ENCODE measurements at regions of chr18 and their contacts with region 1.

Region 1: GRCh38 chr18:3703732-3704176 is 253.8 kb downstream of the TGIF1 start:
- DNase-seq: peak; percentile 59 to 75 (median 75)
- ATAC-seq: peak; percentile 80 to 83
- H3K4me3 ChIP-seq: no peak overlapping the region
- H3K27ac ChIP-seq: no peak overlapping the region
- H3K4me1 ChIP-seq: no peaks in the 10 kb centered on the region
- H3K27me3 ChIP-seq: no peaks in the 10 kb centered on the region

Region 2: GRCh38 chr18:3869848-3870247 is 166.1 kb after region 1 on chr18:
- intact Hi-C with region 1: loop called in 1 of 4 experiments (anchors 10 kb)
- DNase-seq: no peak
- ATAC-seq: peak in 1 of 2 donors; percentile 64
- H3K4me3 ChIP-seq: no peak overlapping the region
- H3K27ac ChIP-seq: no peak overlapping the region
- H3K4me1 ChIP-seq: peaks cover 2% of the 10 kb centered on the region
- H3K27me3 ChIP-seq: no peaks in the 10 kb centered on the region

Region 3: GRCh38 chr18:3995476-3996102 is 291.8 kb after region 1 on chr18:
- intact Hi-C with region 1: loop called in 1 of 4 experiments (anchors 10 kb)
- DNase-seq: peak in 1 of 3 donors; percentile 45
- ATAC-seq: peak in 1 of 2 donors; percentile 51
- H3K4me3 ChIP-seq: no peak overlapping the region
- H3K27ac ChIP-seq: no peak overlapping the region
- H3K4me1 ChIP-seq: no peaks in the 10 kb centered on the region
- H3K27me3 ChIP-seq: no peaks in the 10 kb centered on the region